Left colon (tissue), 2 donors: ENCODE measurements at regions of chr12 and their contacts with region 1.

Region 1: DNA sequence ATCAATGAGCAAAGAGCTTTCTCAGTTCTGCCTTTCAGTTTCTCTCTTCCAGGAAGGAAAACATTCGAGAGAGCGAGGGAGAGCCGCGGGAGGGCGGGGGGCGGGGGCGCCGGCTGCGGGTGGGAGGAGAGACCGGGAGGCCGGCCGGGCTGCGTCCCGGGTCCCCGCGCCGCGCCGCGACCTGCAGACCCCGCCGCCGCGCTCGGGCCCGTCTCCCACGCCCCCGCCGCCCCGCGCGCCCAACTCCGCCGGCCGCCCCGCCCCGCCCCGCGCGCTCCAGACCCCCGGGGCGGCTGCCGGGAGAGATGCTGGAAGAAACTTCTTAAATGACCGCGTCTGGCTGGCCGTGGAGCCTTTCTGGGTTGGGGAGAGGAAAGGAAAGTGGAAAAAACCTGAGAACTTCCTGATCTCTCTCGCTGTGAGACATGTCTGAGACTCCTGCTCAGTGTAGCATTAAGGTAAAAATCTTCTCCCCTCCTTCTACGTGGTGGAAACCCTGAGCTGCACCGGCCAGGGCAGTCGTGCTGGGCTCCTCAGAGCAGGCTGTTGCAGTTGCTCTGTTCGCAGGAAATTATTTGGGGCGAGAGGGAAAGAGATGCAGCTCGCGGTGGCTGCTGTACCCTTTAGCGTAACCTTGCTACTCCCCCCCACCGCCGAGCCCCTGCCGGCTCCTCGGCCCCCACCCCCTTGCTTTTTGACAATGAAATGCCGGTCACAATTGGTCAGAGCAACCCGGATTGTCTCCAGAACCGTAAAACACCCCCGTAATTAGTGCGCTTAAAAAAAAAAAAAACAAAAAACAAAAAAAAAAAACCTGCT is 438 bp downstream of the ETV6 start:
- DNase-seq: peak; percentile 43 to 73
- ATAC-seq: peak; percentile 18

Region 2: DNA sequence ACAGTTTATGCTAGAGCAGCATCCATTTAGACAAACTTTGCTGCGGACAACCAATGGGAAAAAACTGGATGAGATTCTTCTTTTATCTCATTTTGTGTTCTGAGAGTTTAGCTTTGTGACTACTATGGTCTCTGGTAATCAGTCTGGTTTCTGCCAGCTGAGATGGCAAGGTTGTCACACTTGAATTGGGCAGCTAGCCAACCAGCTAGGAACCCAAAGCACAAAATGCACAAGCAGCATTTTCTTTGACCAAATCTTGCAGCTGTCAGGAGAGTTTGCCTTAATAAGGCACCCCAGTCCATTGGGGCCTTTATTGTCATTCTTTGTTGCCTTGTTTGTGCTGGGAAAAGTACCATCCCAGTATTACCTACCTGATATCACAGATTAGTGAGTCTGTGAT is 34.4 kb before region 1 on chr12:
- intact Hi-C with region 1: no loop called
- DNase-seq: no peak
- ATAC-seq: no peak

Region 3: GRCh38 chr12:11719678-11720099 is 69.8 kb after region 1 on chr12:
- intact Hi-C with region 1: loop called in 1 of 2 experiments (anchors 10 kb)
- DNase-seq: peak; percentile 41 to 48
- ATAC-seq: no peak